ENCODE measurements at regions of chr12 and their contacts with region 1.

Region 1: DNA sequence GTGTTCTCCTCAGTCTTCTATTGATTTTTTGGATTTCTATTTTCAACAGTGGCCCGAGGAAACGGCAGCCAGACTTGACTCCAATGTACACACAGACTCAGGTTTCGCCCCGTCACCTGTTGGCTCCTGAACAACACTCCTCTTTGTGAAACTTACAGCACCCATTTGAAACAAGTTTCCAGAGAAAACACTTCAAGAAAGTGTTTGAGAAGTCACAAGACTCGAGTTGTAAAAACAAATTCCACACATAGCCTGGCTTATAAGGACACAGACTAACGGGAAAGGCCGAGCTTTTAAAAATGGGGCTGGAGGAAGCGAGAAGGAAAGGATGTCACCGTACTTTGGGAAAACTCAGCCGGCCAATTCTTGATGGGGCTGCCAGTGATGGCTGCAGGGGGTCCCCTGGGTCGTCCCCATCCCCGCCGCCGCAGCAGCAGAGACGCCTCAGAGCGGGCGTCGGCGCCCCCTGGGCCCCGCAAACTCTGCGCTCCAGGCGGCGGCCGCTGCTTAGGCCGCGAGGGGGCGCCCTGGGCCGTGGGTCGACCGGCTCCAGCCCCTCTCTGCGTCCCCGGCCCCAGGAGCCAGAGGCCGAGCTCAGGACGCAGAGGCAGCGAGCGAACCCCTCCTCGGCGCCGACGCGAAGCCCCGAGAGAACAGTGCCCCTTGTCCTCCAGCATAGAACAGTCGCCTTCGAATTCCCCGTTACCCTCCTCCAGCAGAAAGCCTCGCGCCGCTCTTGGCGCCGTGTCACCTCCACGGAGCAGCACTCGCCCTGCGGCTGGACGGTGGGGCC is 106.9 kb downstream of the PRICKLE1 start:
- DNase-seq: peak; percentile 78
- H3K4me3 ChIP-seq: peak overlapping the region; percentile 59 to 69 (median 59)
- H3K27ac ChIP-seq: peak overlapping the region; percentile 96
- H3K4me1 ChIP-seq: peaks cover 54% of the 10 kb centered on the region
- H3K27me3 ChIP-seq: no peaks in the 10 kb centered on the region
- CTCF ChIP-seq: peak; percentile 91 to 93
- POLR2A ChIP-seq: peak; percentile 56

Region 2: DNA sequence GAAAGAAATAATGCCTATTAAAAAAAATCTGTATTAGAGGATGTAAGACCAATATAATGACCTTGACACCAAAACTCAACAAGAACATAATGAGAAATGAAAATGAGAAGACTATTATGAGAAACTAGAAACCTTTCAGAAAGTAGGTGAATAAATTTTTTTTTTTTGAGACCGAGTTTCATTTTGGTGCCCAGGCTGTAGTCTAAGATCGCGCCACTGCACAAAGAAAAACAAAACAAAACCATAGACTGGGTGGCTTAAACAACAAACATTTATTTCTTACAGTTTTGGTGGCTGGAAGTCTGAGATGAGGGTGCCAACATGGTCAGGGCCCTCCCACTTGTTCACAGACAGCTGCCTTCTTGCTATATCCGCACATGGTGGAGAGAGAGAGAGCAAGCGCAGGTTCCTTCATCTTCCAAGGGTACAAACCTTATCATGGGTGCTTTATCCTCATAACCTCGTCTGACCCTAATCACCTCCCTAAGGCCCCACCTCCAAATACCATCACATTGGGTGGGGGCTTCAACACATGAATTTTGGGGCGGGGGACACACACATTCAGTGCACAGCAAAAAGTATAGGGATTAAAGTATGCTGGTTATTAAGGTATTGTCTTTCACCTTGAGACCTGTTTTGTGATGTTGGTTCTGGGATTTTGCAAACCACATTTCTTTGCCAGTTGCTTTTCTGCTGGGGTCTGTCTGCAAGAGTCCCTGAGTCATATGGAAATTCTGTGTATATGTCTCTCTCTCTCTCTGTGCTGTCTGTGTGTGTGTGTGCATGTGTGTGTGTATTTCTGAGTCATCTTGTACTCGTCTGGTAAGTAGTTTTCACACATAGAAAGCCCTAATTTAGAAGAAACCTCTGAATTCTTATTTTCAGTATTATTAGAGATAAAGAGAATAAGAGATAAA is 183.0 kb before region 1 on chr12:
- CTCF ChIA-PET with region 1: no interaction called
- POLR2A ChIA-PET with region 1: no interaction called
- dilution Hi-C with region 1: no loop called
- intact Hi-C with region 1: loop called (anchors 5 kb)
- DNase-seq: peak; percentile 20
- H3K4me3 ChIP-seq: no peak overlapping the region
- H3K27ac ChIP-seq: no peak overlapping the region
- H3K4me1 ChIP-seq: peaks cover 9% of the 10 kb centered on the region
- H3K27me3 ChIP-seq: no peaks in the 10 kb centered on the region
- CTCF ChIP-seq: no peak
- POLR2A ChIP-seq: no peak

Region 3: DNA sequence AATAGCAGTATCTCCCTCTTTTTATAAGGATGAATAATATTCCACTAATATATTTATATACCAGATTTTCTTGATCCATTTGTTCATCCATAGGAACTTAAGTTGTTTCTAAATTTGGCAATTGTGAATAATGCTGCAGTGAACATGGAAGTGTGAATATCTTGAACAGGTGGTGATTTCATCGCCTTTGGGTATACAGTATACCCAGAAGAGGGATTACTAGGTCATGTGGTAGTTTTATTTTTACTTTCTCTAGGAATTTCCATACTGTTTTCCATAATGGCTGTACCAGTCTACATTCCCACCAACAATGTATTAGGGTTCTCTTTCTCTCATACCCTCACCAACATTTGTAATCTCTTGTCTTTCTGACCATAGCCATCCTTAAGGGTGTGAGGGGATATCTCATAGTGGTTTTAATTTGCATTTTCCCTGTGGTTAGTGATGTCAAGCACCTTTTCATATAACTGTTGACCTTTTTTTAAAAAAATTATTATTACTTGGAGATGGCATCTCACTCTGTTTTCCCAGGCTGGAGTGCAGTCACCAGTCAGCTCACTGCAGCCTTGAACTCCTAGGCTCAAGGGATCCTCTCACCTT is 136.1 kb before region 1 on chr12:
- CTCF ChIA-PET with region 1: no interaction called
- POLR2A ChIA-PET with region 1: no interaction called
- dilution Hi-C with region 1: no loop called
- intact Hi-C with region 1: no loop called
- DNase-seq: no peak
- H3K4me3 ChIP-seq: no peak overlapping the region
- H3K27ac ChIP-seq: no peak overlapping the region
- H3K4me1 ChIP-seq: no peaks in the 10 kb centered on the region
- H3K27me3 ChIP-seq: no peaks in the 10 kb centered on the region
- CTCF ChIP-seq: no peak
- POLR2A ChIP-seq: no peak

Region 4: GRCh38 chr12:42410345-42410744 is 72.3 kb before region 1 on chr12:
- CTCF ChIA-PET with region 1: no interaction called
- POLR2A ChIA-PET with region 1: no interaction called
- dilution Hi-C with region 1: no loop called
- intact Hi-C with region 1: no loop called
- DNase-seq: peak; percentile 42
- H3K4me3 ChIP-seq: no peak overlapping the region
- H3K27ac ChIP-seq: no peak overlapping the region
- H3K4me1 ChIP-seq: peaks cover 18% of the 10 kb centered on the region
- H3K27me3 ChIP-seq: no peaks in the 10 kb centered on the region
- CTCF ChIP-seq: no peak
- POLR2A ChIP-seq: no peak

Region 5: GRCh38 chr12:42534184-42534838 is 51.7 kb after region 1 on chr12:
- CTCF ChIA-PET with region 1: no interaction called
- POLR2A ChIA-PET with region 1: no interaction called
- dilution Hi-C with region 1: no loop called
- intact Hi-C with region 1: no loop called
- DNase-seq: no peak
- H3K4me3 ChIP-seq: no peak overlapping the region
- H3K27ac ChIP-seq: no peak overlapping the region
- H3K4me1 ChIP-seq: peaks cover 4% of the 10 kb centered on the region
- H3K27me3 ChIP-seq: no peaks in the 10 kb centered on the region
- CTCF ChIP-seq: no peak
- POLR2A ChIP-seq: no peak

Region 6: GRCh38 chr12:42568952-42569915 is 86.6 kb after region 1 on chr12:
- CTCF ChIA-PET with region 1: interaction called, 53 read pairs
- POLR2A ChIA-PET with region 1: no interaction called
- dilution Hi-C with region 1: no loop called
- intact Hi-C with region 1: loop called (anchors 1 kb)
- DNase-seq: peak; percentile 72
- H3K4me3 ChIP-seq: no peak overlapping the region
- H3K27ac ChIP-seq: no peak overlapping the region
- H3K4me1 ChIP-seq: peaks cover 33% of the 10 kb centered on the region
- H3K27me3 ChIP-seq: no peaks in the 10 kb centered on the region
- CTCF ChIP-seq: peak; percentile 29 to 35
- POLR2A ChIP-seq: no peak

Region 7: GRCh38 chr12:42725841-42726240 is 243.2 kb after region 1 on chr12:
- CTCF ChIA-PET with region 1: no interaction called
- POLR2A ChIA-PET with region 1: no interaction called
- dilution Hi-C with region 1: no loop called
- intact Hi-C with region 1: loop called (anchors 5 kb)
- DNase-seq: peak; percentile 64
- H3K4me3 ChIP-seq: no peak overlapping the region
- H3K27ac ChIP-seq: no peak overlapping the region
- H3K4me1 ChIP-seq: peaks cover 6% of the 10 kb centered on the region
- H3K27me3 ChIP-seq: no peaks in the 10 kb centered on the region
- CTCF ChIP-seq: no peak
- POLR2A ChIP-seq: no peak

Region 8: DNA sequence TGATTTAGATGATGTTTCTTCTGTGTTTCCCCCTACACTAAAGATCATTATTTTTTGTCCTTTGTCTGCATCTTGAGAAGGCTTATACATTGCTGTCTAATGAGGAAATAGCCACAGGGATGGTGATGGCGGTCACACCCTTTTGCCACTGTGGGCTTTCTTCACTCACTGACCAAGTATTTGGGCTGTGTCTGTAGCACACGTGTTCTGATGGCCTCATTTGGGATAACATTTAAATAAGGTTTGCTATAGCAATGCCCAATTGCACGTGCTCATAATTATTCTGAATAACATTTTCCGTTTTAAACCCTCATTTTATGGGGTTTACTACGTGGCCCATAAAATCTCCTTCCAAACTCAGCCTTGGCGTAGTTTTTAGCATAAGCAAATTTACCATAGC is 337.2 kb after region 1 on chr12:
- CTCF ChIA-PET with region 1: no interaction called
- POLR2A ChIA-PET with region 1: no interaction called
- dilution Hi-C with region 1: no loop called
- intact Hi-C with region 1: no loop called
- DNase-seq: no peak
- H3K4me3 ChIP-seq: no peak overlapping the region
- H3K27ac ChIP-seq: no peak overlapping the region
- H3K4me1 ChIP-seq: no peaks in the 10 kb centered on the region
- H3K27me3 ChIP-seq: no peaks in the 10 kb centered on the region
- CTCF ChIP-seq: no peak
- POLR2A ChIP-seq: no peak

Region 9: DNA sequence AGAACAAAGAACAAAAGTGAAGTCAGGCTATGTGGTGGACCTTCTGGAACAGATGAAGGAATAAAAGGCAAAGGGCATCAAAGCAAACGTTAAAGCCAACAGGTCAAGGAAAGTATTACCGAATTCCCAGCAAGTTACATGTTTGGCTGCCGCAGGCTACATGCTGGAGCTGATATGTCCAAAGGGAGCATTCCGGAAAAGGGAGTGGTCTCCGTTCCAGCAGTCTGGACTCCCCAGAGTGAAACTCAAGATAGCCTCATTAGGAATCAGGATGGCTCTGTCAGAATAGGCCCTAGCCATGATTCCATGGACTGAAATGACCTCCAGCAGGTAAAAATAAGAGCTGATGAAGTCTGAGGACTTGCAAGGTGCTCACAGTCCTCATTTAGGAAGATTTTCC is 486.7 kb after region 1 on chr12:
- CTCF ChIA-PET with region 1: interaction called, 3 read pairs
- POLR2A ChIA-PET with region 1: no interaction called
- dilution Hi-C with region 1: no loop called
- intact Hi-C with region 1: loop called (anchors 2 kb)
- DNase-seq: peak; percentile 82
- H3K4me3 ChIP-seq: no peak overlapping the region
- H3K27ac ChIP-seq: peak overlapping the region; percentile 63
- H3K4me1 ChIP-seq: peaks cover 42% of the 10 kb centered on the region
- H3K27me3 ChIP-seq: no peaks in the 10 kb centered on the region
- CTCF ChIP-seq: no peak
- POLR2A ChIP-seq: peak; percentile 61

Region 10: DNA sequence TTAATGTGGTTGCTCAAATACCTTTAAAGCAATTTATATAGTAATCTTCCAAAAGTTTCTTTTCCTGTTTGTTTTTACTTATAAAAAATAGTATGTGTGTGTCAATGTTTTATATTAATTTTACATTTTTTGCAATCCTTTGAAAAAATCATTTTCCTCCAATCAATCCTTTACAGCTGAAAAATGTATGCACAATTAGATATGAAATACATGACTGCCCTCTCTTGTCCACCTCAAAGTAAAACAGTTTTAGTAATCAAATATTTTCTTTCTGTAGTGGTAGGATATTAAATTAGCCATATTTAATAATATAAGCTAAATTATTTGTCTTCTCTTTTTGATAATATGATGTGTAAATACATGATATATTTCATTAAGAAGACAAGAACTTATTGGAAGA is 799.5 kb after region 1 on chr12:
- CTCF ChIA-PET with region 1: interaction called, 101 read pairs
- POLR2A ChIA-PET with region 1: interaction called, 6 read pairs
- dilution Hi-C with region 1: no loop called
- intact Hi-C with region 1: loop called (anchors 1 kb)
- DNase-seq: peak; percentile 72
- H3K4me3 ChIP-seq: no peak overlapping the region
- H3K27ac ChIP-seq: no peak overlapping the region
- H3K4me1 ChIP-seq: peaks cover 51% of the 10 kb centered on the region
- H3K27me3 ChIP-seq: no peaks in the 10 kb centered on the region
- CTCF ChIP-seq: peak in 1 of 2 donors; percentile 14
- POLR2A ChIP-seq: no peak

Measured in endothelial cell of umbilical vein (primary cell).